H1 (cell line): ENCODE measurements at regions of chr2 and their contacts with region 1.

Region 1: DNA sequence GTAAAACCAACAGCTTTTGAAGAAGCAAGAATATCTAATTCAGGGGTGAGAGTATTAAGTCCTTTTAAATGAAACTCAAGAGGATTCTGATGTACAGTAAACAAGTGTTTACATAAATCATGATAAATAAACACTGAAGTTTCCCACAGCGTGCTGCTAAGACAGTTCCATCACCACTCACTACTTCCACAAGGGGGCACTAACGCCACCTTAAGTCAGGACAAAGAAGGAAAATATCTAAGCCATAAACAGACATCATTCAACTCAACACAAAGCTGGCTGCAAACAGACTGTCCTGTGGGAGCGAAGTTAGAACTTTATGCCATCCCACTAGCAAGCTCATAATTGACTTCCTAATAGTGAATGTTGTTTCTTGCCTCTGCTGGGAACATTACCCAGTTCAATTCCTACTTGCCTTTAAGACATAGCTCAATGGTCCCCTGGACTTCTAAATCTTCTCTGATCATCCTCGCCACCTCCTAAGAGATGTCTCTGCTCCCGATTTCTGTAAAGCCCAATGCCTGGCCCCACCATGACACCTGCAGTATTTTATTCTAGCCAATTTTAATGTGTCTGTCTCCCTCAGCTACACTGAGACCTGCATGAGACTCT is 36.5 kb downstream of the MRPL44 start:
- DNase-seq: peak in 1 of 2 experiments; percentile 68
- H3K4me3 ChIP-seq: no peak overlapping the region
- H3K27ac ChIP-seq: no peak overlapping the region
- H3K4me1 ChIP-seq: peaks cover 0 to 4% (median 0%) of the 10 kb centered on the region in 4 experiments; a peak in 1 of 7 replicates
- H3K27me3 ChIP-seq: no peaks in the 10 kb centered on the region
- CTCF ChIP-seq: peak; percentile 43 to 87 (median 77)
- EP300 ChIP-seq: no peak
- POLR2A ChIP-seq: no peak
- RAD21 ChIP-seq: peak; percentile 88 to 92

Region 2: DNA sequence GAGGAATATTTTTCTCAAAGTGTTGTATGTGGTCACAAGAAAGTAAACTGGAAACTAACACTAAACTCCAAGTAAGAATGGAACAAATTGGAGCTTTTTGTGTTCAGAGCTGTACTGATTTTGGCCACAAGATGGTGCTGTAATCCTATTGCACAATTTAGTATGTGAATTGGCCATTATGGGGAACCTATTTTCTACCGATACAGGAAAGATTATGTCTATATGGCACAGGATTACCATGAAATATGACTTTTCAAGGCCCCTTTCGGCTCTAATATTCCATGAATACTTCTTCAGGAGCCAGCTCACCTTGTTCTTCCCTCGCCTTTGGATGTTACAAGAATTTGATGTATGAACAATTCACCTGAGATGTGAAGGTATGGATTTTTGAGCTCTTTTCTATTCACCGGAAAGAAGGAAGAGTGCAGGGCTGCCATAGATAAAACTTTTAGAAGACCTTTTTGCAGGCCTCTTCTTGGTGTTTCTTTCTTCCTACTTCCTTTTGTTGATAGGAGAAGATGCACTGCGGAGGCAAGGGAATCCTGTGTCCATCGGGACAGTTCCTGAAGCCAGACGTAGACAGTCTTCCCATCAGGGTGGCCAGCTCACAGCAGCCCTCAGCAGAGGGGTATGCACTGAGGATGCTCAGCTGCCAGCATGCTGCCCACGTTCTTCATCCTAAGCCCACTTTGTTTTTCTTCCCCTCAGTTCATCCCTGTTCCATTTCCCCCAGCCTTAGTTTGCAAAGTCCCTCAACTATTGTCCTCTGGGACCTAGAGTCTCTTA is 23.2 kb before region 1 on chr2:
- CTCF ChIA-PET with region 1: interaction called, 282 read pairs
- POLR2A ChIA-PET with region 1: interaction called, 3 read pairs
- DNase-seq: peak in 1 of 2 experiments; percentile 74
- H3K4me3 ChIP-seq: no peak overlapping the region
- H3K27ac ChIP-seq: no peak overlapping the region
- H3K4me1 ChIP-seq: no peaks in the 10 kb centered on the region
- H3K27me3 ChIP-seq: no peaks in the 10 kb centered on the region
- CTCF ChIP-seq: peak in 2 of 3 experiments; percentile 61 to 83; a peak in 3 of 4 replicates
- EP300 ChIP-seq: no peak
- POLR2A ChIP-seq: no peak
- RAD21 ChIP-seq: peak; percentile 91 to 92

Region 3: GRCh38 chr2:224031358-224031970 is 37.7 kb after region 1 on chr2:
- CTCF ChIA-PET with region 1: interaction called, 29 read pairs
- POLR2A ChIA-PET with region 1: interaction called, 3 read pairs
- DNase-seq: no peak
- H3K4me3 ChIP-seq: no peak overlapping the region
- H3K27ac ChIP-seq: no peak overlapping the region
- H3K4me1 ChIP-seq: peaks cover 5 to 21% (median 16%) of the 10 kb centered on the region in 4 experiments
- H3K27me3 ChIP-seq: peaks cover 0 to 5% (median 2%) of the 10 kb centered on the region in 4 experiments; a peak in 2 of 7 replicates
- CTCF ChIP-seq: no peak
- EP300 ChIP-seq: no peak
- POLR2A ChIP-seq: no peak
- RAD21 ChIP-seq: no peak

Region 4: DNA sequence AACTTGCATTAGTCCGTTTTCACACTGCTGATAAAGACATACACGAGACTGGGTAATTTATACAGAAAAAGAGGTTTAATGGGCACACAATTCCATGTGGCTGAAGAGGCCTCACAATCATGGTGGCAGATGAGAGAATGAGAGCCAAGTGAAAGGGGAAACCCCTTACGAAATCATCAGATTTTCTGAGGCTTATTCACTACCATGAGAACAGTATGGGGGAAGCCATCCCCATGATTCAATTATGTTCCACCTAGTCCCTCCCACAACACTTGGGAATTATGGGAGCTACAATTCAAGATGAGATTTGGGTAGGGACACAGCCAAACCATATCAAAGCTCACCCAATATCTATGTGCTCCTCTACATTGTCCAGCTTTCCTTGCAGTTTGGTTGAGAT is 61.4 kb after region 1 on chr2:
- CTCF ChIA-PET with region 1: interaction called, 33 read pairs
- POLR2A ChIA-PET with region 1: no interaction called
- DNase-seq: no peak
- H3K4me3 ChIP-seq: no peak overlapping the region
- H3K27ac ChIP-seq: no peak overlapping the region
- H3K4me1 ChIP-seq: no peaks in the 10 kb centered on the region
- H3K27me3 ChIP-seq: no peaks in the 10 kb centered on the region
- CTCF ChIP-seq: no peak
- EP300 ChIP-seq: no peak
- POLR2A ChIP-seq: no peak
- RAD21 ChIP-seq: no peak

Region 5: GRCh38 chr2:224094413-224094812 is 100.7 kb after region 1 on chr2:
- CTCF ChIA-PET with region 1: interaction called, 13 read pairs
- POLR2A ChIA-PET with region 1: no interaction called
- DNase-seq: no peak
- H3K4me3 ChIP-seq: no peak overlapping the region
- H3K27ac ChIP-seq: no peak overlapping the region
- H3K4me1 ChIP-seq: no peaks in the 10 kb centered on the region
- H3K27me3 ChIP-seq: no peaks in the 10 kb centered on the region
- CTCF ChIP-seq: no peak
- EP300 ChIP-seq: no peak
- POLR2A ChIP-seq: no peak
- RAD21 ChIP-seq: no peak

Region 6: GRCh38 chr2:224284134-224284946 is 290.6 kb after region 1 on chr2:
- CTCF ChIA-PET with region 1: interaction called, 436 read pairs
- POLR2A ChIA-PET with region 1: interaction called, 3 read pairs
- DNase-seq: no peak
- H3K4me3 ChIP-seq: no peak overlapping the region
- H3K27ac ChIP-seq: no peak overlapping the region
- H3K4me1 ChIP-seq: no peaks in the 10 kb centered on the region
- H3K27me3 ChIP-seq: peaks cover 0 to 1% (median 0%) of the 10 kb centered on the region in 4 experiments; a peak in 1 of 7 replicates
- CTCF ChIP-seq: peak in 2 of 3 experiments; percentile 75 to 76; a peak in 3 of 4 replicates
- EP300 ChIP-seq: no peak
- POLR2A ChIP-seq: no peak
- RAD21 ChIP-seq: peak; percentile 74 to 79